Spleen (tissue), 13 donors: ENCODE measurements at regions of chr17 and their contacts with region 1.

Region 1: GRCh38 chr17:74303305-74303704 is 22.7 kb upstream of the KIF19 start:
- DNase-seq: no peak
- H3K4me3 ChIP-seq: no peak overlapping the region
- H3K27ac ChIP-seq: no peak overlapping the region
- H3K4me1 ChIP-seq: peaks cover 3 to 37% (median 10%) of the 10 kb centered on the region in 6 donors
- H3K27me3 ChIP-seq: peaks cover 0 to 37% (median 0%) of the 10 kb centered on the region in 7 donors
- CTCF ChIP-seq: no peak
- POLR2A ChIP-seq: no peak

Region 2: GRCh38 chr17:74356646-74357465 is 53.6 kb after region 1 on chr17:
- intact Hi-C with region 1: loop called (anchors 5 kb)
- DNase-seq: no peak
- H3K4me3 ChIP-seq: peak overlapping the region in 7 of 8 donors; percentile 25 to 64 (median 29)
- H3K27ac ChIP-seq: peak overlapping the region in 4 of 8 donors; percentile 23 to 48 (median 38)
- H3K4me1 ChIP-seq: peaks cover 6 to 68% (median 44%) of the 10 kb centered on the region in 6 donors
- H3K27me3 ChIP-seq: peaks cover 6 to 100% (median 65%) of the 10 kb centered on the region in 7 donors
- CTCF ChIP-seq: peak in 1 of 11 experiments; percentile 24
- POLR2A ChIP-seq: no peak